ENCODE measurements at regions of chr2 and their contacts with region 1.

Region 1: DNA sequence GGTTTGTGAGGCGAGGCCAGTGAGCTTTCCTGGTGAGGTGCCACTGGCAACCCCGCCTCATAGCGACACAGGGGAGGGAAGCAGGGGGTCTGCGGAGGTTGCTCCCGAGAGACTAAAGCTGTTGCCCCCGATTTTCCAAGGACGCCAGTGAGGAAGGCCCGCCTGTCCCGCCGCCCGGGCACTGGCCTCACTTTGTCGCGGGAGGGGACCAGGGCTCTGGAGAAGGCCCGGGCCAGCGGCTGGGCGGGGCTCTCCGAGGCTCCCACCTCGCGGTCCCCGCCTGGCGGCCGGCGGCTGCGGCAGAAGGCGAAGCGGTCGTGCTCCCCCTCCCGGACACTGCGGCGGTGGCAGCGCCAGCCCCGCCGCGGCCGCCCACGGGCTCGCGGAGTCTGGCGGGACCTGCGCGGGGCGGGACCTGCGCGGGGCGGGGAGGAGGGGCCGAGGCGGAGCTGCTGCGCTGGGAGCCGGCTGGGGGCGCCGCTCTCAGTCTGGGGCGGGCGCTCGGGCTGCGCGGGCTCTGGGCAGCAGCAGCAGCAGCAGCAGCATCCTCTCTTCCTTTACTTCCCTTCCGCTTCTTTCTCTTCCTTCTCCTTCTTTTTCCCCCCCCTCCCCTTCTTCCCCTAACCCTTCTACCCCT is at the start of gene MAP2:
- DNase-seq: peak; percentile 77
- H3K4me3 Mint-ChIP-seq: peak within 1 kb of the TSS; percentile 81
- H3K27ac Mint-ChIP-seq: no peak within 1 kb of the TSS
- H3K4me1 Mint-ChIP-seq: peaks cover 18% of the 10 kb centered on the region
- H3K27me3 Mint-ChIP-seq: no peaks in the 10 kb centered on the region
- CTCF ChIP-seq: peak; percentile 87
- total RNA-seq, gene MAP2: 16.2 and 40.2 TPM in 2 replicates

Region 2: GRCh38 chr2:209344349-209344748 is 79.3 kb before region 1 on chr2:
- CTCF ChIA-PET with region 1: interaction called, 14 read pairs
- POLR2A ChIA-PET with region 1: no interaction called
- intact Hi-C with region 1: no loop called
- DNase-seq: no peak
- H3K4me3 Mint-ChIP-seq: no peak overlapping the region
- H3K27ac Mint-ChIP-seq: no peak overlapping the region
- H3K4me1 Mint-ChIP-seq: peaks cover 8% of the 10 kb centered on the region
- H3K27me3 Mint-ChIP-seq: no peaks in the 10 kb centered on the region
- CTCF ChIP-seq: no peak

Region 3: GRCh38 chr2:209380293-209380692 is 43.4 kb before region 1 on chr2:
- CTCF ChIA-PET with region 1: interaction called, 9 read pairs
- POLR2A ChIA-PET with region 1: interaction called, 3 read pairs
- intact Hi-C with region 1: loop called (anchors 5 kb)
- DNase-seq: no peak
- H3K4me3 Mint-ChIP-seq: no peak overlapping the region
- H3K27ac Mint-ChIP-seq: no peak overlapping the region
- H3K4me1 Mint-ChIP-seq: peaks cover 10% of the 10 kb centered on the region
- H3K27me3 Mint-ChIP-seq: no peaks in the 10 kb centered on the region
- CTCF ChIP-seq: no peak

Region 4: DNA sequence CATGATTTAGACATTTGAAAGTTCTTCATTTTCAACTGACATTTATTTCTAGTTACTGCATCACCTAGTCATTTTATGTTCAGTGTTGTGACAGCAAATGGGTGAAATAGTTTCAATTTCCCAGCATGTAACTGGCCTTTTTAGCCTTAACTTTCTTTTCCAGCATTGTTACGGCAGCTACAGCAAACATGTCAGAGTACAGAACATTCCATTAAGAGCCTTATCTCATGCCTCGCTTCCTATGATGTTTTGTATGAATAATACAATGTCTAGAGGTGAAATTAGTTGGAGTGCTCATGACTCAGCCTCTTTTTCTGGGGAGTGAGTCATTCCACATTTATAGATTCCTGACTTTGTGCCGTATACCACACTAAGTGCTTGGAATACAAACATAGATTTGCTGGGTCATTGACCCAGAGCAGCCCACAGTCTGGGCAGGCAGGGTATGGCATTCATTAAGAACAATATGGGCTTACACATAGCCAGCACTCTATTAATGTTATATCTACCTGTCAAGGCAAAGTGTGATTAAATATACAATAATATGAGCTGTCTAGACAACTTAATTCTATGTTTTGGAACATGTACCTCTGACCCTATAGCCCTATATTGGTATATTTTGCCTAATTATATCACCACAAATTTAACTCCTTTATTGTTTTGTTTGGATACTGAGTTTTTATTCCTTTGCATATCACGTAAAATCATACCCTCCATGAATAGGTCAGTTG is 72.3 kb after region 1 on chr2:
- CTCF ChIA-PET with region 1: interaction called, 5 read pairs
- POLR2A ChIA-PET with region 1: interaction called, 4 read pairs
- intact Hi-C with region 1: loop called (anchors 2 kb)
- DNase-seq: peak; percentile 92
- H3K4me3 Mint-ChIP-seq: no peak overlapping the region
- H3K27ac Mint-ChIP-seq: peak overlapping the region; percentile 83
- H3K4me1 Mint-ChIP-seq: peaks cover 9% of the 10 kb centered on the region
- H3K27me3 Mint-ChIP-seq: no peaks in the 10 kb centered on the region
- CTCF ChIP-seq: no peak

Region 5: DNA sequence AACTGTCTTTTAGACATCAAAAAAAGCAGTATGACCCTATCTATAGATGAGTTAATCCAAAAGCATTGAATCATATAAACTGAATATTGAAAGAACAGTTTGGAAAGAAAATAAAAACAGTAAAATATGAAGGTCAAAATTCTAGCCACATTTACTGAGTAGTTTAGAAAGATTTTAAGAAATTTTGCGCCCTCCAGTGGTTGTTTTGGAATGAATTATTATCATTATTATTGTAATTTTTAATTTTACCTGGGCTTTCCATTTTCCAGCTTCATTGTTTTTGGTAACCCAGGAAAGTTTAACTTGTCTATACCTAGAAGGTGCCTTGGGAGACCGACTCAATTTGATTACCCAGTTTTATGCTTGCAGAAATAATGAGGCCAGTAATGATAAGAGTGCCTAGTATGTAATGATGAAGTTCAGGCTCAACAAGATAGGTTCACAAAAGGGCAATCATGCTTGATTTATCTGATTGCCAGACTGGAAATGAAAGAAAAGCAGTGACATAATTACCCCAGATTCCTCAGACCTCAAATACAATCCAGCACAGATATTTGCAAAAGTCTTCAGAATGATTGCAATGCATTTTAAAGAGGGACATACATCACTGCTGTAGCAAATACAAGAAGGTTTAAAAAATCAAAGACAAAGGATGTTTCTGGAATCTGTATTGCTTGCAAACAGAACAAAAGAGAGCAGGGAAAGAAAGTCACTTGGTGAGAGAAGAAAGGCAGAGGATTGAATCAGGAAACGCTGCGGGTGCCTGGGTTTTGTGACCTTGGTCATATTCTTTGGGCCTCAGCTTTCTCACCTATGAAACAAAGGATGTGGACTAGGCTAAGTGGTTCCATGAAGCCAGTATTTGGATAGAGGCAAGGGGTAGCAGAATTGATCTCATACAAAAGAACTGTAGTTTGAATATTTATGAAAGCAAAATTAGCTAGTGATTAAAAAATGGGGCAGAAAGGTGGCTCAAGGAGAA is 154.0 kb after region 1 on chr2:
- CTCF ChIA-PET with region 1: interaction called, 6 read pairs
- POLR2A ChIA-PET with region 1: no interaction called
- intact Hi-C with region 1: loop called (anchors 1 kb)
- DNase-seq: peak; percentile 45
- H3K4me3 Mint-ChIP-seq: no peak overlapping the region
- H3K27ac Mint-ChIP-seq: no peak overlapping the region
- H3K4me1 Mint-ChIP-seq: no peaks in the 10 kb centered on the region
- H3K27me3 Mint-ChIP-seq: no peaks in the 10 kb centered on the region
- CTCF ChIP-seq: peak; percentile 32

Measured in MCF 10A (cell line).